ENCODE measurements at regions of chr7 and their contacts with region 1.

Region 1: DNA sequence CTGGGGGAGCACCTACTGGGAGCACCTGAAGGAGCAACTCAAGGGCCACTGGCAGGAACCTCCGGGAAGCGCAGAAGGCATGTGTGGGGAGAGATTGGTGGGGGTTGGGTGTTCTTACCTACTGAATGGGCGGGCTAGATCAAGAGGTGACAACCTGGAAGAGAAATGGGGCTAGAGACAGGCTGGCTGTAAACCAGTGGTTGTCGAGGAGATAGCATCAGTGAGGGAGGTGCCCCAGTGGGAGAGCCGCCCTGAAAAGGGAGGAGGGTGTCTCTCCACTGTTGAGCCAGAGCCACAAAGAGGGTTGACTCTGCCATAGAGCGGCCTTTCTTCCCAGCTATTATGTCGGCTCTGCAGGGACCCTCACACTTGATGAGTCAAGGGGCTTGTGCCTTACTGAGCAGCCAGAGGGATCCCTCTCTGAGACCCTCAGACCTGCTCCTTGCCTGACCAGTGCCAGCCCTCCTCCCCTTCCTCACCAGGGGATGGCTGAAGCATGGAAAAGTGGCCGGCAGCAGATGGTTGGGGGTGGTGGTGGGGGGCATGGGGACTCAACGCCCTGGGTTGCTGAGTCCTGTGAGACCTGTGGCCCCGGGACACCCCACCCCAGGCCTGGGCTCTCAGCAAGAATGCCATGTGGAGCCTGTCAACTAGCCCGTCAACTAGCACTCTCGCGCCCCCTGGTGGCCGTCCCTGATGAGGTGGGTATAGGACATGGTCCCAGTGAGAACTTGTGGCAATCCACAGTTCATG is 36.5 kb upstream of the PURB start:
- DNase-seq: peak; percentile 87
- CTCF ChIP-seq: peak; percentile 96

Region 2: DNA sequence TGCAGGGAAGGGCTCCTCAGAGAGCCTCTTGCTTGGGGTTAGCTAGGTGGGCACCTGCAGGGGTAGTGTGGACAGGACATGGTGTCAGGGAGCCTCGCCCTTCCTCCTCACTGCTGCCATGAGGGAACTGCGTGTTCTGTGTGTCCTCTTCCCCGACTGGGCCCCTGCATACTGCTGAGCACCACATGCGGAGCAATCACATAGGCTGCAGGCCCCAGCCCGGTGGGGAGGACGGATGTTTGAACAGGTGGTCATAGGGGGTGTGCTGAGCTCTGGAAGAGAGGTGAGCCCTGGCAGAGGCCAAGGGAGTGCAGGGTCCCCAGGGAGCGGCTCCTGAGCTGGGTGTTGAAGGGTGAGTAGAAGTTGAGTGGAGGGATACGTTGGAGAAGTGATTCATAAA is 221.5 kb before region 1 on chr7:
- CTCF ChIA-PET with region 1: no interaction called
- POLR2A ChIA-PET with region 1: no interaction called
- DNase-seq: peak; percentile 5
- CTCF ChIP-seq: no peak

Region 3: DNA sequence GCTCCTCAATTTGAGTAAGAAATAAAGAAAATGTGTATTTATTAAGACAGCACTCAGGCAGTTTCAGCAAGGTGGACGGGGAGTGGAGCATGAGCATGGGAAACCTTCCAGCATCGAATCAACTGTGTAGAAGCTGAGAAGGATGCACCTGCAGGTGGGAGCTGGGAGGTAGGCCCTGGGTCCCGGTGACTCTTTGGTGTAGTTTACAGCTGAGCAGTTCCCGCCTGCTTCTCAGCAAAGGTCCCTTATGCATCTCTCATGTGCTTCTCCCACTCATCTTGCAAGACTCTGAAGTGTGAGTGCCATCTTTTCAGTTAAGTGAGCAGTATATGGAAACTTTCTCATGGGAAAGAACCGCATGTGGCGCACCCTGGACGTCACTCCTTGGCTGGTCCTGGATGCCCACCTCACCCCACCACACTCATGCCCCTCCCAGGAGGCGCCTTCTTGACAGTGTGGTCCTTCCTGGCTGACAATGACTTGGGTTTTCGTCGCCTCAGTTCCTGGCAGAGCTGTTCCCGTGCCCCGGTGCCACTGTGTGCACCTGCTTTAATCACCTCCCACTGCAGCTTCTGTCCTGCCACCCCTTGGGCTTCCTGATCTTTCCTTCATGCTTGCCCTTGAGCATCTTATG is 16.7 kb before region 1 on chr7:
- CTCF ChIA-PET with region 1: interaction called, 10 read pairs
- POLR2A ChIA-PET with region 1: no interaction called
- DNase-seq: no peak
- CTCF ChIP-seq: no peak